H1 (cell line): ENCODE measurements at regions of chr14 and their contacts with region 1.

Region 1: DNA sequence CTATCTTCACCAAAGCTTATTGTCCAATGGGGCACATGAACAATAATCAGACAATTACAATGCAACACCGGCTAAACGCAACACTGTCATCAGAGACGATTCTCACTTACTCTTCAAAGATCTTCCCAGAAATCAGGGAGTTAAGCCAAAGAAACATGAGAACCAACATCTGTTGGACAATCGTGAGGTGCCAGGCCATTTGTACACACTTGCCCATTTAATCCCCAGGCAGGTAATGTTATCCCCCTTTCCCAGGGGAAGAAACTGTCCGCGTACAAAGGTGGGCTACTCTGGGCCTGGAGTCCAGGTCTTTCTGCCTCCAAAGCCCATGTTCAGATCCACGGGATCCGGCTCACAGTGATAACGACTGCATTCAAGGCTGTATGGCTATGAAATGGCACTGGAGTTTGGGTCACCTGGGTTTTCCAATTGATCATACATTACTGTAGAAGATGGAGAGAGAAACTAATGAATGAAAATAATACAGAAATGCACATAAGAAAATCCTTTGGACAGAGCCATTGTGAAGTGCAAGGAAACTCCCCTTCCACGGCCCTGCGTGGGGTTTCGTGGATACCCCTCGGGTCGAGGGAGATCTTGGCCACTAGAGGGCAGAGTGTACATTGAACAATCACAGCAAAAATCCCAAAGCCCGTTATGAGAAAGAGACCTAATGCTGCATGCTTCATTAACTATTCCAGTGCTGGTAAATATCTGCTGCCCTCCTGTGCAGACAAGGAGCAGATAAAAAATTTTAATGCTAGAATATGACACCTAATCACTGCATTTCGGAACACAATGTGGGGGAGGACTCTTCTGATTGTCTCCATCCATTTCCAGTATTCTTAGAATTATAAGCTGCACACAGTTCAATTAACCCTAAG is 111.4 kb downstream of the EGLN3 start:
- DNase-seq: no peak
- H3K4me3 ChIP-seq: no peak overlapping the region
- H3K27ac ChIP-seq: no peak overlapping the region
- H3K4me1 ChIP-seq: peaks cover 0 to 9% (median 6%) of the 10 kb centered on the region in 4 experiments; a peak in 5 of 7 replicates
- H3K27me3 ChIP-seq: no peaks in the 10 kb centered on the region
- CTCF ChIP-seq: peak; percentile 69 to 75 (median 74)
- EP300 ChIP-seq: no peak
- POLR2A ChIP-seq: no peak
- RAD21 ChIP-seq: peak; percentile 68 to 76

Region 2: GRCh38 chr14:33617190-33617622 is 222.2 kb before region 1 on chr14:
- CTCF ChIA-PET with region 1: no interaction called
- POLR2A ChIA-PET with region 1: no interaction called
- DNase-seq: no peak
- H3K4me3 ChIP-seq: no peak overlapping the region
- H3K27ac ChIP-seq: no peak overlapping the region
- H3K4me1 ChIP-seq: peaks cover 0 to 5% (median 1%) of the 10 kb centered on the region in 4 experiments; a peak in 5 of 7 replicates
- H3K27me3 ChIP-seq: no peaks in the 10 kb centered on the region
- CTCF ChIP-seq: no peak
- EP300 ChIP-seq: no peak
- POLR2A ChIP-seq: no peak
- RAD21 ChIP-seq: no peak

Region 3: GRCh38 chr14:33805593-33805992 is 33.8 kb before region 1 on chr14:
- CTCF ChIA-PET with region 1: interaction called, 11 read pairs
- POLR2A ChIA-PET with region 1: no interaction called
- DNase-seq: no peak
- H3K4me3 ChIP-seq: no peak overlapping the region
- H3K27ac ChIP-seq: no peak overlapping the region
- H3K4me1 ChIP-seq: peaks cover 0 to 5% (median 0%) of the 10 kb centered on the region in 4 experiments; a peak in 2 of 7 replicates
- H3K27me3 ChIP-seq: no peaks in the 10 kb centered on the region
- CTCF ChIP-seq: no peak
- EP300 ChIP-seq: no peak
- POLR2A ChIP-seq: no peak
- RAD21 ChIP-seq: no peak

Region 4: DNA sequence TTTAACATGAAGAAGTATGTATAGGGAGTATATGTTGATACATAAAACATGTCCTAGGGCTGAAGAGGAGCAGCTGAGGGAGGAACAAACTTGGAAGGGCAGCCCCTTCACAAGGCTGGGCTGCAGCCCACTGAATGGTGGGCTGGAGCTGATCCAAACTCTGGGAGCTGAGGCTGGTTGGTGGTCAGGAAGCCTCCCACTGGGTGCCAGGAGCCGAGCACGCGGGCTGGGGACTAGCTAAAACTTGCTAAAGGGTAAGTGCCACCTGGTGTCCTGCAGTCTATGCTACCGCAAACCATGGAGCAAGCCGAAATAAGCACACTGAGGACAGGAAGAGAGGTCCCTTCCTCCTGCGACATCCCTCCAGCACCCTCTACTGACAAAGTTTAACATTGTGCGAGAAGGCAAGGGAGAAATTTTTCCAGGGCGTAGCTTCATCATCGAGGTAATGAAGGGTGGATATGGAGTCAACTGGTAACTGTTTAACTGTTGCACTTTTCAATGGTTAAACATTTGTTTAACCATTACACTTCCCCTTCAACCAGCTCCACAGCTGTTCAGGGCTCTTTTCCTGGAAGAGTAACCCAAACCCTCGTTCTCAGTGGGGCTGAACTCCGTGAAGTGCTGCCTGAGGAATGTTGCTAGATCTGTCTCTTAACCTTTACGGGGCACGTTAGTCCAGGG is 69.2 kb after region 1 on chr14:
- CTCF ChIA-PET with region 1: interaction called, 26 read pairs
- POLR2A ChIA-PET with region 1: no interaction called
- DNase-seq: no peak
- H3K4me3 ChIP-seq: no peak overlapping the region
- H3K27ac ChIP-seq: no peak overlapping the region
- H3K4me1 ChIP-seq: no peaks in the 10 kb centered on the region; a peak in 1 of 7 replicates
- H3K27me3 ChIP-seq: no peaks in the 10 kb centered on the region
- CTCF ChIP-seq: peak; percentile 48 to 62 (median 52)
- EP300 ChIP-seq: no peak
- POLR2A ChIP-seq: no peak
- RAD21 ChIP-seq: peak; percentile 65

Region 5: DNA sequence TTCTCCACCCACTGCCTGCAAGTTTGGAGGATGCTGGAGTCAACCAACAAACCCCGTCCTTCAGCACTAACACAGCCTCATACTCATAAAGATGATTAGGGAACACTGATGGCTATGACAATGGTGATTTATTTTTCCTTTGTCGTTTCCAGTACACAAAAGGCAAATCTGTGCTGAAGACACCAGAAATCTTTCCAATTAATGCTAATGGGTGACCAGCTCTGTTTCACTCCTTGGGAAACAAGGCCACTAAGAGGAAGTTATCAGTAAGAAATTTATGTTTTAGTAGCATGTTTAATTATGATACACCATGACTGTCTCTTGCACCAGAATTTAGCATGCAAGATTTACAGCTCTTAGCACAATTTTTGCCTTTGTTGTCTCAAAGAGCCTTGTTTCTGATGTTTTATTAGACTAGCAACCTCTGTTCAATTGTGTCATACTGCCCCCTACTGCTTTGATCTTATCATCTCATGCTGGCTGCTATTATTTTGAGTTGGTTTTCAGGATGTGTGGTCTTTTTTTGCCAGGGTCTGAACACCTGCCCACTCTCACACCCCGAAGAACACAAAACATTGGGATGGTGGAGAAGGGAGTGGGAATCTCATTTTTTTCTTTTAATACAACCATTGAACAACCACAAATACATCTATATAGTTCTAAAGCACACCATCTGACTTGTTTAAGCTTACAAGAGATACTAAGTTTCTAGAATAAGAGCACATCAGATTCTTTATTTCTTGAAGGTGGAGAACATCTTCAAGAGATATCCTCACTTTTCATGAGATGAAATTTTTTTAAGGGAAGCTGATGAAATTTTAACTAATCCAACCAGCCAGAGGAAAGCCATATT is 461.7 kb after region 1 on chr14:
- CTCF ChIA-PET with region 1: interaction called, 10 read pairs
- POLR2A ChIA-PET with region 1: no interaction called
- DNase-seq: no peak
- H3K4me3 ChIP-seq: no peak overlapping the region
- H3K27ac ChIP-seq: no peak overlapping the region
- H3K4me1 ChIP-seq: peaks cover 0 to 3% (median 0%) of the 10 kb centered on the region in 4 experiments; a peak in 1 of 7 replicates
- H3K27me3 ChIP-seq: no peaks in the 10 kb centered on the region
- CTCF ChIP-seq: peak in 2 of 3 experiments; percentile 56 to 70; a peak in 2 of 4 replicates
- EP300 ChIP-seq: no peak
- POLR2A ChIP-seq: no peak
- RAD21 ChIP-seq: peak; percentile 83 to 85

Region 6: DNA sequence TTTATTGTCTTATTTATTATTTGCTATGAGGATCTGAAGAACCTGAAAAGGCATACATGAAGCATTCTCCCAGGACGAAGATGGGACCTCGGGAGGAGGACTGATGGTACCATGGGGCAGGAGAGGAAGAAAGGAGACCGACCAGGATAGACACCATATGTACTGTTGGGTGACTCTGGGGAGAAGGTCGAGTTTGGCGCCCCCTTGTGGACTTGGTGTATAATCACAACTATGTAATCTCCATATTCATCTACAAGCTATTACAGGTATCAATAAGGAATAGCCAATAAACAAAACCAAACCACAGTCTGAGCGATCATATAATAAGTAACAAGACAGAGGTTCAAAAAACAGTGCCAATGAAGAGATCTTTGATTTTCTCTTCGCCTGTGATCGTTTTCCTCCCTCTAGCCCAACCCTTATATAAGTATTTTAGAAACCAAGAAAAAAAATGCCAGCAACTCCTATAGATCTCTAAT is 483.5 kb after region 1 on chr14:
- CTCF ChIA-PET with region 1: interaction called, 10 read pairs
- POLR2A ChIA-PET with region 1: no interaction called
- DNase-seq: peak in 1 of 2 experiments; percentile 79
- H3K4me3 ChIP-seq: no peak overlapping the region
- H3K27ac ChIP-seq: no peak overlapping the region
- H3K4me1 ChIP-seq: no peaks in the 10 kb centered on the region
- H3K27me3 ChIP-seq: no peaks in the 10 kb centered on the region
- CTCF ChIP-seq: peak; percentile 56 to 74 (median 58)
- EP300 ChIP-seq: no peak
- POLR2A ChIP-seq: no peak
- RAD21 ChIP-seq: peak; percentile 33 to 47; a peak in 3 of 4 replicates